ENCODE measurements at regions of chr1 and their contacts with region 1.

Region 1: DNA sequence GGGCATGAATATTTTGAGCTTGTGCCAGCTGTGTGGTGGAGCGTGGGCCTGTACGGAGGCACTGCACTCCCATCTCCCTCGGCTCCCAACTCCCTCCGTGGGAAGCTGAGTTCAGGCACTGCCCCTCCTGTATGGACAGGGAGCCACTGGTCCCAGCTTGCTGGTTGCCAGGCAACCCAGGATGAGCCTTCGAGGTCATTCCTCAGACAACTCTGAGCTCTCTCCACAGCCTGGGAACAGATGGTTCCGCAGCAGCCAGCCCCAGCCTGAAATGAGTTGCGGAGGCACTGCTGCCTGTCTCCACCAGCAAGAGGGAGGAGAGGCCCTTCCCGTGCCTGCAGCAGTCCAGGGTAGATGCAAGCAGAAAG is 58.4 kb upstream of the TENT5B start:
- DNase-seq: no peak
- H3K4me3 ChIP-seq: no peak overlapping the region
- H3K27ac ChIP-seq: no peak overlapping the region
- H3K4me1 ChIP-seq: no peaks in the 10 kb centered on the region
- H3K27me3 ChIP-seq: no peaks in the 10 kb centered on the region
- CTCF ChIP-seq: no peak
- EP300 ChIP-seq: no peak
- POLR2A ChIP-seq: no peak

Region 2: DNA sequence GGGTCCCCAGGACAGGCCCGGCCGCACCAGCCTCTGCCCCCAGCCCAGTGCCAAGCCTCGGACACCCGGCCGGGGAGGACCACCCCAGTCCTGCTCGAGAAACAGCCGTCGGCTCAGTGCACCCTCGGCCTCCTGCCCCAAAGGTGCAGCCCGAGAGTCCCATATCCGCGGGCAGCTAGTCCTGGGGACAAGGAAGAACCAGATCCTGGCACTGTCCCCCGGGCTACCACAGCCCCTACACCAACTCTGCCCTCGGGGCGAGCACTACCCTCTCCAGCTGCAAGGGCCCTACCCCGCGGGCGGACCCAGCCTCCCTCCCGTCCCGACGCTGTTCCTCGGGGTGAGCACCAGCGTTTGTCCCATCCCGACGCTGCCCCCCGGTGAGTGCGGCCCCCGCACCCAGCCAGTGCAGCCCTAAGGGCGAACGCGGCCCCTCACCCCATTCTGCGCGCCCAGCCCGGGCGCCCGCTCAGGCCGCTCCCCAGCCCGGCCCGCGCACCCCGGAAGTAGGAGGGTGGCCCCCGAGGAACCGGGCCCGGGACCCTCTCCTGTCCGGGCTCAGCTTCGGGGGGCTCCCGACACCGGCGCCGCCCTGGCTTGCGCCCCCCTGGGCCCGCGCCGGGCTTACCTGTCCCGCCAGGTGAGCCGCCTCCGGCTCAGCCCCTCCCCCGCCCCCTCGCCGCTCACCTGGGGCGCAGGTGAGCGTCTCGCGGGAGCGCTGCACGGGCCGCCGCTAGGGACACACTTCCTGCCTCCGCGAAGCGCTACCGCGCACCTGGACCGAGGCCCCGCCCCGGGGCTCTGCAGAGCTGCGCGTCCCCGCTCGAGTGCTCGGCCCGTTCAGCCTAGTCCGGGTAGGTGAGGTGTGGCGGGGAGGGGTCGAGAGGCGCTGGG is 111.1 kb before region 1 on chr1 and contains the start of gene KDF1:
- in situ Hi-C with region 1: no loop called
- intact Hi-C with region 1: loop called (anchors 5 kb)
- DNase-seq: peak; percentile 90
- H3K4me3 ChIP-seq: peak within 1 kb of the TSS; percentile 25 to 71 (median 64)
- H3K27ac ChIP-seq: peak within 1 kb of the TSS; percentile 64 to 83 (median 78)
- H3K4me1 ChIP-seq: peaks cover 0 to 20% (median 12%) of the 10 kb centered on the region in 4 donors
- H3K27me3 ChIP-seq: peaks cover 44% of the 10 kb centered on the region
- CTCF ChIP-seq: peak; percentile 22 to 78 (median 42)
- EP300 ChIP-seq: no peak
- POLR2A ChIP-seq: peak; percentile 80
- total RNA-seq, gene KDF1: 11.6 to 36.2 (median 29.8) TPM

Region 3: DNA sequence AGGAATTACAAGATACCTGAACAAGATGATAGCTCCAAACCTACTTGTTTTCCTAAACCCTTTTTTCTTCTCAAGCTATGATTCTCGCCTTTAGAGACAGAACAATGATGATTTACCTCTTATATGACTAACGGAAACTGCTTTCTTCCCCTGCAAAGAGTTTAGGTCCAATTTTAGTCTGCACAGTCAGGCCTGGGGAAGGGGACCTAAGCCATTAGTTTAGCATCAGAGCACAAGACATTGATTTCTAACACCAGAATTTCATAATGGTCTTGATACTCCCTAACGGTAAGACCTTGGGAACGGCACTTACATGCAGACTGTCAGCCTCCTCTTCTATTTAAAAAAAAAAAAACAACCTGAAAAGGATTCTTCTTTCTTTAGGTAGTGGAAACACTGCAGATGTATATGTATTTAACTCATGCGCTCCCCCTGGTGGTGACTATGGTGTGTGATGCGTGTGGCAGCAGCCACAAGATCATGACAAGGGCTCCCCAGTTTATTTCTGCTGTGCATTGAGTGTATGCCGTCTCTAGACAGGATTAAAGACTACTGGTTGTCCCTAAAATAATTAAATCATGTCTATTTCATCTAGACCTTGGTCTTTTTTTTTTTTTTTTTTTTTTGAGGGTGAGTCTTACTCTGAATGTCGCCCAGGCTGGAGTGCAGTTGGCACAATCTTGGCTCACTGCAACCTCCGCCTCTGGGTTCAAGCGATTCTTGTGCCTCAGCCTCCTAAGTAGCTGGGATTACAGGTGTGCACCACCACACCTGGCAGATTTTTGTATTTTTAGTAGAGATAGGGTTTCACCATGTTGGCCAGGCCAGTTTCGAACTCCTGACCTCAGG is 213.6 kb after region 1 on chr1:
- in situ Hi-C with region 1: no loop called
- intact Hi-C with region 1: no loop called
- DNase-seq: peak; percentile 89
- H3K4me3 ChIP-seq: no peak overlapping the region
- H3K27ac ChIP-seq: no peak overlapping the region
- H3K4me1 ChIP-seq: no peaks in the 10 kb centered on the region
- H3K27me3 ChIP-seq: no peaks in the 10 kb centered on the region
- CTCF ChIP-seq: peak; percentile 82 to 89 (median 87)
- EP300 ChIP-seq: no peak
- POLR2A ChIP-seq: no peak